Left cardiac atrium (tissue), 4 donors: ENCODE measurements at regions of chr9 and their contacts with region 1.

Region 1: GRCh38 chr9:137302176-137302994 is at the start of gene NRARP:
- DNase-seq: peak; percentile 95
- ATAC-seq: peak; percentile 62 to 70
- total RNA-seq, gene NRARP: 4.9 to 11.5 TPM

Region 2: DNA sequence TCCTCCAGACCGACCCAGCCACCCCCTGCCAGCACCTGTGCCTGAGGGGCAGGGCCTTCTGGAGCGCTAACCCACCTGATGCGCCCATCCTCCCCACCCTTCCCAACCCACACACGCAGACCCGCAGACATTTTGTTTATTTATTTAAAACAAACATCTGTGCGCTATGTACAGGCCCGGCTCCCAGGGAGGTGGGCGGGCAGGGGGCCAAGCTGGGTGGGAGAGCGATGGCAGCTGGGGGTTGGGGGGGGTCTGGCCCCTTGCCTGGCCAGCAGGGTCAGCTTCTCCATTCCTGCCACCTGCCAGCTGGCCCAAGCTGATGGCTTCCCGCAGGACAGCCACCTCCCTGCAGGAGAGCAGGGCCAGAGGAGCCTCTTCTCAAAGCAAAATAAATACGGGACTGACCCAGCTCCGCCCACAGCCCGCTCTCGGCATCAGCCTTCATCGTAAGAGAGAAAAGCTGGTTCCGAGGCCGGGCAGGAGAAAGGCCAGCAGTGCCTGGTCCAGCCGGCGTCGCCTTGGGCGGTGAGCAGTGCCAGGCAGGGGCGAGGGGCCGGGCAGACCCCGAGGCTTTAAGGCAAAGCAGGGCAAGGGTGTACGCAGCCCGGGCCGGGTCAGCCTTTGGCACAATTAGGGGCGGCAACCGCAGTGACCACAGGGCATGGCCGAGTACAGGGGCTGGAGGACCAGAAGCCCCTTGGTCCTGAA is 295.1 kb before region 1 on chr9:
- intact Hi-C with region 1: no loop called
- DNase-seq: no peak
- ATAC-seq: peak in 1 of 2 donors; percentile 5

Region 3: GRCh38 chr9:137406876-137407589 is 104.6 kb after region 1 on chr9:
- intact Hi-C with region 1: loop called in 1 of 2 experiments (anchors 10 kb)
- DNase-seq: peak; percentile 81
- ATAC-seq: peak; percentile 91 to 92

Region 4: DNA sequence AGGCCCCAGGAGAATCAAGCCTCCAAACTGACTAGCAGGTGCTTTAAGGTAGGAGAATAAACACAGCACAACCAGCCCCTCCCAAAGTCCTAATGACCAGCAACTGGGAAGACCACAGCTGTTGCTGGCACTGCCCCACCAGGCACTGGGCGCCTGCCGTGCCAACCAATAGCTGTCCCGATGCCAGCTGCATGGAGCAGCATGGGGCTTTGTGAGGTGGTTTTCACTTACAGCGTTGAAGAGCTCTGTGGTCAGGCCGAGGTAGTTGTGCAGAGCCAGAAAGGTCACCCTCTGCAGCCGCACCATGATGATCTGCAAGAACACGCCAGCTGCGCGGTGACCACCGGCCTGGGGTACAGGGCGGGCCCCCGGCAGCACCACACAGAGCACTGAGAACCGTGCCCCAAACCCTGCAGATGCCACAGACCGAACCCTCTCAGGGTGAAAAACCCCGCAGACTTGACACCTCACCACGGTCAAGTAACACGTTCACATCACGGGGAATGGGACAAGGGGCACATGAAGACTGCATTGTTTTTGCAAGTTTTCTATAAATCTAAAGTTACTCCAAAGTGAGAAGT is 219.1 kb after region 1 on chr9:
- intact Hi-C with region 1: loop called (anchors 10 kb)
- DNase-seq: no peak
- ATAC-seq: no peak